ENCODE measurements at regions of chr10 and their contacts with region 1.

Region 1: DNA sequence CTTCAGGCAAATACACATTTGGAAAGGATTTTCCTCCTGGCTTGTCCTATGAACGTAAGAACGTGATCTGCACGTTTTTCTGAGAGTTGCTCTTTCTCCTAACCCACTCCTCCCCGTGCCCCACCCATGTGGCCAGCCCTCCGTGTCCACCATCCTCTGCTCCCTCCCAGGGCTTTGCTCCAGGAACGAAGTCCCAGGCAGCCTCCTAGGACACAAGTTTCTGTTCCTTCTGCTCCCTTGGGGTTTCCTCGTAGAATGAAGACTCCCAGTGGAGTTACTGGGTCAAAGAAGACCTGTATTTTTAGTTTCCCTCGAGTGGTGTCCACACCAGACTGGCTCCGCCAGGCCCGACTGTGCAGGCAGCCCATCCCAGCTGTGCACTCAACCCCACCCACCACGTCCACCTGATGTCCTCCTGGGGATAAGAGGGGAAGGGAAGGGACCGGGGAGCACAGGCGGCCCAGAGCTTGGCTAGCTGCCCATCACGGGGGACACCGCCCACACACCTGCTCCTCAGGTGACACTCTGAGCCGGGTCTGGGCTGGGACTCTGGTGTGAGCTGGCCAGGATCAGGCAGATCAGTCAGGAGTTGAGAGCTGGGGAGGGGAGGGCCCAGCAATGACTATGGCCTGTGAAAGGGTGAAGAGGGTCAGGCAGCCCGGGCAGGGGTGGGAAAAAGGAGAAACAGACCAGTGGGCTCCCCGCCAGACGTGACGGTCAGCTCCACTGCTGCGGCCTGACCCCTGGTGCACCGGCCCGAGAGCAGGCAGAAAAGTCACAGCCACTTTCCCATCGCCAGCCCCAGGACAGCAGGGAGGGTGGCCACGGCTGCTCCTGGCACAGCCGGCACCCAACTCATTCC is 54.3 kb upstream of the PPP2R2D start:
- DNase-seq: peak in 4 of 10 donors; percentile 23 to 42 (median 31)
- H3K4me3 ChIP-seq: no peak overlapping the region
- H3K27ac ChIP-seq: no peak overlapping the region
- H3K27me3 ChIP-seq: no peaks in the 10 kb centered on the region
- CTCF ChIP-seq: no peak

Region 2: GRCh38 chr10:131359796-131360195 is 486.7 kb before region 1 on chr10:
- intact Hi-C with region 1: loop called in 1 of 2 experiments (anchors 10 kb)
- DNase-seq: no peak
- H3K4me3 ChIP-seq: no peak overlapping the region
- H3K27ac ChIP-seq: no peak overlapping the region
- H3K27me3 ChIP-seq: peaks cover 0 to 41% (median 3%) of the 10 kb centered on the region in 45 donors
- CTCF ChIP-seq: peak in 16 of 56 donors; percentile 6 to 47 (median 20)

Measured in dorsolateral prefrontal cortex (tissue), 120 donors.